ENCODE measurements at regions of chr3 and their contacts with region 1.

Region 1: GRCh38 chr3:183385698-183386613 is 42.5 kb downstream of the MCF2L2 start:
- DNase-seq: no peak
- ATAC-seq: peak; percentile 91
- H3K4me3 ChIP-seq: no peak overlapping the region
- H3K27ac ChIP-seq: peak overlapping the region in 1 of 2 donors; percentile 65
- H3K4me1 ChIP-seq: no peaks in the 10 kb centered on the region
- H3K27me3 ChIP-seq: no peaks in the 10 kb centered on the region

Region 2: DNA sequence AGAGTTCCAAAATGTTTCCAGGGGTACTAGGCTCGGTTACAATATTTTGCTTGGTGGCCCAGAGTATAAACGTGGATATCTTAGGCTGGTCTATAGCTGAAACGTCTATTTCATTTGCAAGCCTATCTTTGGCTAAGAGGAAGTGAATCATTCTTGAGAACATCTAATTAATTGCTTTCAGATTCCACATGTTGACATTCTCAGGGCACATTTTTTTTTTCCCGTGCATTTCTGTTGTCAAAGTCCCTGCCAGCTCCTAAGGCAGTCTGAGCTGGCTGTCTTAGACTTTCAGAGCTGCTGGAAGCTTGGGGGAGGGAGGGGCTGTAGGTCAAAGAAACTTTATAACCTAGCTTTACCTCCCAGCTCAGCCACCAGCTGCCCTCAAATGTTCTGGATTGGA is 200.3 kb before region 1 on chr3:
- intact Hi-C with region 1: loop called (anchors 2 kb)
- DNase-seq: no peak
- ATAC-seq: no peak
- H3K4me3 ChIP-seq: no peak overlapping the region
- H3K27ac ChIP-seq: no peak overlapping the region
- H3K4me1 ChIP-seq: no peaks in the 10 kb centered on the region
- H3K27me3 ChIP-seq: no peaks in the 10 kb centered on the region

Region 3: DNA sequence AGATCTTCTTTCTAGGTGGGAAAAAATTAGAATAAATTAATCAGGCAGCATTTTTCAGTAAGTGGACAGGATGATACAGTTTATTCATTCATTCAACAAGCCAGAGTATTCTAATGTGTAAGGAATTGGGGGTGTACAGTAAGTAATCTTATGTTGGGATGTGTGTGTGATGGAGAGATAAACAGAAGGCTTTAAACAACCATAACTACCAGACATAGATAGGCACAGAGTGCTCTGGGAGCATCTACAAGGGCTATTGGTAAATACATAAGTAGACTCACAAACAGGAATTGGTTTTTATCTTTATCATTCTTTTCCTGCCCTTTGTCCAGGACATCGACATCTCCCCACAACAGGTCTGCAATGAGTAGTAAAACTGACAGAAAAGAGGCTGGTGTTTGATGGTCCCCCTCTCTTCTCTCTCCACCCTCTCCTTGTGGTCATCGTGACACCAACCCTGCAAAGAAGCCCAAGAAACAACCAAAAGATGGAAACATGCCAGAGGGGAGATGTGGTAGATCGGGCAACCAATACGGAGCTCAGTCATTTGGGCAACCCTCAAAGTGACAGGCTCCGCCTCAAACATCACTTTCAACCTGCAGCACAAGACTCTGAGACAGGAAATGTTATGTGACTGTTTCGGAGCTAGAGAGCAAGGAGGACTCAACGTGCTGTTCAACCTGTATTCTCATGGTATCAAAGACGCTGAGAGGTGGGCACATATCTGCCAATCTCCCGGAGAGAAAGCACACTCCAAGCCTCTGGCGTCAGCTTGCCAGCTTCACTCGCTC is 161.6 kb before region 1 on chr3:
- intact Hi-C with region 1: no loop called
- DNase-seq: no peak
- ATAC-seq: no peak
- H3K4me3 ChIP-seq: no peak overlapping the region
- H3K27ac ChIP-seq: no peak overlapping the region
- H3K4me1 ChIP-seq: no peaks in the 10 kb centered on the region
- H3K27me3 ChIP-seq: no peaks in the 10 kb centered on the region

Region 4: GRCh38 chr3:183252973-183253901 is 132.7 kb before region 1 on chr3 and contains the start of gene B3GNT5:
- intact Hi-C with region 1: loop called in 1 of 2 experiments (anchors 10 kb)
- DNase-seq: peak; percentile 86 to 93
- ATAC-seq: peak; percentile 90
- H3K4me3 ChIP-seq: peak within 1 kb of the TSS; percentile 62 to 87
- H3K27ac ChIP-seq: peak within 1 kb of the TSS in 1 of 2 donors; percentile 13
- H3K4me1 ChIP-seq: no peaks in the 10 kb centered on the region
- H3K27me3 ChIP-seq: no peaks in the 10 kb centered on the region
- total RNA-seq, gene B3GNT5: 9.2 to 10.0 TPM

Measured in aorta (tissue), 5 donors.